Activated CD4-positive, alpha-beta T cell treated with anti-CD3 and anti-CD28 coated beads for 36 hours (primary cell): ENCODE measurements at regions of chr22 and their contacts with region 1.

Region 1: GRCh38 chr22:30742291-30743256 is 47.9 kb downstream of the OSBP2 start:
- DNase-seq: peak; percentile 69
- ATAC-seq: peak; percentile 61
- H3K4me3 Mint-ChIP-seq: peak overlapping the region; percentile 6
- H3K27ac Mint-ChIP-seq: peak overlapping the region; percentile 82
- H3K4me1 Mint-ChIP-seq: peaks cover 64% of the 10 kb centered on the region
- H3K27me3 Mint-ChIP-seq: peaks cover 7% of the 10 kb centered on the region

Region 2: DNA sequence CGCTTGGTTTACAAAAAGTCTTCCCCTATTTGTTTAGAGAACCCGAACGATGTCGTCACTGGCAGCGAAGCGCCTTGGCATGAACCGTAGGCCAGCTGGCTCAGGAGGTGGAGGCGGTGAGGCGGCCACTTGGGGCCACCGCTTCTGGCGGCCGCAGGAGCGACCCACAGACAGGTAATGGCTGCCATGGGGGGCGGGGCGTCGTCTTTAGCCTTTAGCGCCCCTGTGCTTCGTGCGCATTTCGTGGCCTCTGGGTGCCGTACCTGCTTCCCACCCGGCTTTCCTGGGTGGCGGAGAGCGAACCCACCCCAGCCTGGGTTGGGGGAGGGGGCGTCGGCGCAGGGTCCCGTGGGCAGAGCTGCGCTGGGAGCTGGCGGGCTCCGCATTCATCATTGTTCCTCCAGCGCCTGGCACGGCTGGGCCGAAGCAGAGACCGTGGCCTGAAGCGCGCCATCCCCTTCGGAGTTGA is 48.4 kb before region 1 on chr22:
- CTCF ChIA-PET with region 1: no interaction called
- POLR2A ChIA-PET with region 1: no interaction called
- intact Hi-C with region 1: loop called in 1 of 2 experiments (anchors 2 kb)
- DNase-seq: peak; percentile 72
- ATAC-seq: peak; percentile 76
- H3K4me3 Mint-ChIP-seq: peak overlapping the region; percentile 79
- H3K27ac Mint-ChIP-seq: peak overlapping the region; percentile 74
- H3K4me1 Mint-ChIP-seq: peaks cover 5% of the 10 kb centered on the region
- H3K27me3 Mint-ChIP-seq: peaks cover 18% of the 10 kb centered on the region

Region 3: DNA sequence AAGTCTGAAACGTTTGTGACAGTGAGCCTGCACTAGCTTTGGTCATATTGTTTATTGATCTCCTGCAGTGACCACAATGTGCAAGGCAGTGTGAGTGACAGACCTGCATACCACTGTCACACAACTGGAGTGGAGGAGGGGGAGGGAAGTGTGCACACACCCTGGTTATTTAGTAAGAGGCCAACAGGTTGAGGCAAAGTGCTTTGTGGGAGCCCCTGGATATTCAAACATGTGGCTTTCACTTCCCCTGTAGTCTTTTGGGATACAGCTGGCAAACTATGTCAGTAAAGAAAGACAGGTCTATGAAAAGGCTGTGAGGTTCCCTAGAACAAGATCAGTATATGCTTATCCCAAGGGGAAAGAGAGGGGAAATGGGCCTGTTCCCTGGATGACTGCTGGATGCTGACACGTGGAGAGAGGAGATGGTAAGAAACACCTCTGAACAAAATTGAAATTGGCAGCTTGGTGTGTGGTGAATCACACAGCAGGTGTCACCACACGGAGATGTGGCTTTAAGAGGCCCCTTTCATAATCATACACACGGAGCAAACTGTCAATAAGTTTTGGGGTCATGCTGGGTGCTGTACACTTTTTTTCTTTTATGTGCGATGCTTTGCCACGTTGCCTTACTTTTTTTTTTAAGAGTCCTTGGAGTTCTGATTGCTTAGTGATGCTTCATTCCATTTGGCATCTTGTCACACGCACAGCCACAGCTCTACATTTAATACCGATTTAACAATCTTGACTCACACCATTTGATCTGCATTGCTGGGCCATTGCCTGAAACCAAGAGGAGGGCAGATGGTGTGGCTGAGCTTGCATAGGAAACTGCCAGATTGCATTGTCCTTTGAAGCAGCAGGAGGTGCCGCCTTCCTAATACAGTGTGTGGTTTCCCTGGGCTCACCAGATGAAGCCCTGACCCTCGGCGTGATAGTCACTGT is 36.6 kb before region 1 on chr22:
- CTCF ChIA-PET with region 1: no interaction called
- POLR2A ChIA-PET with region 1: no interaction called
- intact Hi-C with region 1: loop called (anchors 1 to 2 kb)
- DNase-seq: peak; percentile 55
- ATAC-seq: peak; percentile 91
- H3K4me3 Mint-ChIP-seq: no peak overlapping the region
- H3K27ac Mint-ChIP-seq: peak overlapping the region; percentile 16
- H3K4me1 Mint-ChIP-seq: peaks cover 19% of the 10 kb centered on the region
- H3K27me3 Mint-ChIP-seq: no peaks in the 10 kb centered on the region

Region 4: GRCh38 chr22:30754971-30755756 is 12.6 kb after region 1 on chr22:
- CTCF ChIA-PET with region 1: interaction called, 13 read pairs
- POLR2A ChIA-PET with region 1: no interaction called
- intact Hi-C with region 1: no loop called
- DNase-seq: peak; percentile 78
- ATAC-seq: peak; percentile 92
- H3K4me3 Mint-ChIP-seq: no peak overlapping the region
- H3K27ac Mint-ChIP-seq: no peak overlapping the region
- H3K4me1 Mint-ChIP-seq: no peaks in the 10 kb centered on the region
- H3K27me3 Mint-ChIP-seq: no peaks in the 10 kb centered on the region

Region 5: DNA sequence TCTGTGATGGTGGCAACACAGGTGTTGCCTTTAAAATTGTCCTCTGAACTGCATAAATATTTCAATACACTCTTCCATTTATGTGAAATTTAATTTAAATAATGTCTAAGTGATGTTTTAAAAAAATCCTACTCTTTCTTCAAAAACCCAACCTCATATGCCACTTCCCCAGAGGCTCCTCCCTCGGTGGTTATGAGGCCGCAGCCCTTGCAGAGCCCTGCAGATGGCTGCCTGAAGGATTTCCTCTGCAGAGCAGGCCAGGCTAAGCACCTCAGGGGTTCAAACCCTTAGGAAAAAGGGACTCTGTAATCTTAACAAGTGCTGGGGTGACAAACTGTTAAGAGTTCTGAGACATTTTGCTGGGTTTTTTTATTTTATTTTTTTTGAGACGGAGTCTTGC is 200.8 kb after region 1 on chr22:
- CTCF ChIA-PET with region 1: no interaction called
- POLR2A ChIA-PET with region 1: no interaction called
- intact Hi-C with region 1: no loop called
- DNase-seq: peak; percentile 59
- ATAC-seq: peak; percentile 49
- H3K4me3 Mint-ChIP-seq: no peak overlapping the region
- H3K27ac Mint-ChIP-seq: no peak overlapping the region
- H3K4me1 Mint-ChIP-seq: peaks cover 64% of the 10 kb centered on the region
- H3K27me3 Mint-ChIP-seq: no peaks in the 10 kb centered on the region